Heart right ventricle (tissue), 16 donors: ENCODE measurements at regions of chr1 and their contacts with region 1.

Region 1: GRCh38 chr1:12132092-12132491 is 34.7 kb upstream of the TNFRSF1B start:
- DNase-seq: no peak
- ATAC-seq: no peak
- H3K4me3 ChIP-seq: no peak overlapping the region
- H3K27ac ChIP-seq: peak overlapping the region in 9 of 10 donors; percentile 27 to 86 (median 52)
- H3K4me1 ChIP-seq: peaks cover 5 to 52% (median 35%) of the 10 kb centered on the region in 9 donors
- H3K27me3 ChIP-seq: no peaks in the 10 kb centered on the region
- CTCF ChIP-seq: no peak

Region 2: DNA sequence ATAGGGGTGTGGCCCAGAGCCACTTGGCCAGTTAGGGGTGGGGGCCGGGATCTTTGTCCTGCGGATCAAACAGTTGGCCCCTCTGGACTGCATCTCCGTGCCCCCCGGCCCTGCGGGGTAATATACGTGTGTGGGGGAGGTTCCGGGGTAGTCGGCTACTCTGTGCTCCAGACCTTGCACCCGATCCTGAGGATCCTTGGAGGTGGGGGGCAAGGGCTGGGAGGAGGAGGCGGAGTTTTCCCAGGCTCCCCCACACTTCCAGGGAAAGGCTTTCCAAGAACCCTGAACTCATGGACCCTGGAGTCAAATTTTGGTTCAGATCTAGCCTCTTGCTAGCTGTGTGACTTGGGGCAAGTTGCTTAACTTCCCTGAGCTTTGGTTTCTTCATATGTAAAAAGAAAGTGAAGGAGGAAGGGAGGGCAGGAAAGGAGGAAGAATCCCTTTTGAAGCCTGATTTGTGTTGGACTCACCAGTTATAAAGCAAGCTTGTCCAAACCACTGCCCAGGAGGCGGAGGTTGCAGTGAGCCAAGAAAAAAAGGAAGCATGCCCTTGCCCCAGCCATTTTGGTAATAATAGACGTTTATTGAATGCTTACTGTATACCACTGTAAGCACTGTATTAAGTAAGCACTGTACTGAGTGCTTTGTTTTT is 112.1 kb before region 1 on chr1:
- intact Hi-C with region 1: no loop called
- DNase-seq: no peak
- ATAC-seq: peak in 7 of 8 donors; percentile 1 to 40 (median 8)
- H3K4me3 ChIP-seq: peak overlapping the region; percentile 77 to 98 (median 90)
- H3K27ac ChIP-seq: peak overlapping the region; percentile 28 to 92 (median 82)
- H3K4me1 ChIP-seq: peaks cover 0 to 18% (median 14%) of the 10 kb centered on the region in 9 donors
- H3K27me3 ChIP-seq: no peaks in the 10 kb centered on the region
- CTCF ChIP-seq: no peak

Region 3: GRCh38 chr1:12184008-12184681 is 52.1 kb after region 1 on chr1:
- intact Hi-C with region 1: loop called in 1 of 10 experiments (anchors 5 kb)
- DNase-seq: peak; percentile 86 to 89
- ATAC-seq: peak; percentile 86 to 91 (median 90)
- H3K4me3 ChIP-seq: peak overlapping the region in 9 of 10 donors; percentile 9 to 44 (median 36)
- H3K27ac ChIP-seq: peak overlapping the region; percentile 83 to 99 (median 93)
- H3K4me1 ChIP-seq: peaks cover 20 to 100% (median 93%) of the 10 kb centered on the region in 9 donors
- H3K27me3 ChIP-seq: no peaks in the 10 kb centered on the region
- CTCF ChIP-seq: peak in 8 of 9 donors; percentile 12 to 61 (median 41)